ENCODE measurements at regions of chr3 and their contacts with region 1.

Region 1: GRCh38 chr3:126304704-126305103 is 52.5 kb downstream of the KLF15 start:
- DNase-seq: no peak
- ATAC-seq: no peak
- H3K4me3 ChIP-seq: no peak overlapping the region
- H3K27ac ChIP-seq: no peak overlapping the region
- H3K4me1 ChIP-seq: no peaks in the 10 kb centered on the region
- H3K27me3 ChIP-seq: no peaks in the 10 kb centered on the region
- CTCF ChIP-seq: no peak

Region 2: DNA sequence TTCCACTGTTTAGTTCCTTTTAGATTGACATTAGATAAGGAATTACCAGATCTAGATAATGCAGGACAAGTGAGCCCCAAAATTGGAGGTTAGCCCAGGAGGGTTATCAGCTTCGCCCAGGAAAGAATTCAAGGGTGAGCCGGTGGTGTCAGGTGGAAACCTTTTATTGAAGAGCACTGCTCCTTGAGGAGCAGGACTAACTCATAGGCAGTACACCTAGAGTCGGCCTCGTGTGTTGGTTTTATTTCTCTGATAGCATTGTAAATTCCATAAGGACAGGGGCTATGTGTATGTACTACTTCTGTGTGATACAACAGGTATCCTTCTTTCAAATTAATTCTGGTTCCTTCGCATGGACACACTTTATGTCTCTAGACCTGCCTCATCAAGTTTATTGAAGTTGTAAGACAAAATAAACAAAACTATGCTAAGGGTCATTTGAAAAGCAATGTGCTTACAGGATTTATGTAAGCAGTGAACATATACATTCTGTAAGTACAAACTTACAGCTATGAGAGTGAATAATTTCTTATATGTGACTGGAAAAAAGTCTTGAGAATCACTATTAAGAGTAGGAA is 841.9 kb before region 1 on chr3:
- intact Hi-C with region 1: no loop called
- DNase-seq: no peak
- ATAC-seq: no peak
- H3K4me3 ChIP-seq: no peak overlapping the region
- H3K27ac ChIP-seq: no peak overlapping the region
- H3K4me1 ChIP-seq: no peaks in the 10 kb centered on the region
- H3K27me3 ChIP-seq: no peaks in the 10 kb centered on the region
- CTCF ChIP-seq: no peak

Region 3: DNA sequence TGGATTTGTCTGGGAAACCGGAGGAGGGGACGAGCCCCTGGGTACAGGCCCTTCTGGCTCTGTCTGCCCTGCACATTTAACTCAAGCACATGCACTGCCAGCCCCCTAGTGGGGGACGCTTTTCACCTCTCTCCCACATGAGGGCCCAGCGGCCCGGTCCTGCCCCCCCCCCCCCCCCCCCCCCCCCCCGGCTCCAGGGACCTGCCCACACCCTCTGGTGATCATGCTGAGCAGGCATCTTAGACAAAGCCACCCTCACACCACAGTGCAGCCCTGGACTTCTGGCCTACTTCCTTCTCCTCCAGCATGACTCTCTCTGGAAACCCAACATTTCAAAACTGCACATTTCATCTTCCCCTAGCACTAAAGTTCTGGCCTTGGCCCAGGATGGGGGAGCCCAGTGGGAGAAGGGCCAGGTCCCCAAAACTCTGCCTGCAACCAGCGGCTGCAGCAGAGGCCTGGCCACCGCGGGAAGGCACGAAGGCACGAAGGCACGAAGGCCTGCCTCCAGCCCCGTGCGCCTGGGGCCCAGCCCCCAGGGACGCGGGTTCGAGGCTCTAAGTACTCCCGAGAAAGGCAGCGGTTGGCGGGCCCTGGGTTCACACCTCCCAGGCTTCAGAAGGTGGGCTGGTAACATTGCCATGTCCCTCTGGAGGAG is 38.4 kb after region 1 on chr3:
- intact Hi-C with region 1: loop called in 1 of 2 experiments (anchors 5 kb)
- DNase-seq: peak; percentile 19 to 52
- ATAC-seq: peak in 1 of 4 donors; percentile 4
- H3K4me3 ChIP-seq: no peak overlapping the region
- H3K27ac ChIP-seq: no peak overlapping the region
- H3K4me1 ChIP-seq: peaks cover 13% of the 10 kb centered on the region
- H3K27me3 ChIP-seq: no peaks in the 10 kb centered on the region
- CTCF ChIP-seq: no peak

Measured in psoas muscle (tissue), 8 donors.